CD8-positive, alpha-beta memory T cell (primary cell): ENCODE measurements at regions of chr19 and their contacts with region 1.

Region 1: DNA sequence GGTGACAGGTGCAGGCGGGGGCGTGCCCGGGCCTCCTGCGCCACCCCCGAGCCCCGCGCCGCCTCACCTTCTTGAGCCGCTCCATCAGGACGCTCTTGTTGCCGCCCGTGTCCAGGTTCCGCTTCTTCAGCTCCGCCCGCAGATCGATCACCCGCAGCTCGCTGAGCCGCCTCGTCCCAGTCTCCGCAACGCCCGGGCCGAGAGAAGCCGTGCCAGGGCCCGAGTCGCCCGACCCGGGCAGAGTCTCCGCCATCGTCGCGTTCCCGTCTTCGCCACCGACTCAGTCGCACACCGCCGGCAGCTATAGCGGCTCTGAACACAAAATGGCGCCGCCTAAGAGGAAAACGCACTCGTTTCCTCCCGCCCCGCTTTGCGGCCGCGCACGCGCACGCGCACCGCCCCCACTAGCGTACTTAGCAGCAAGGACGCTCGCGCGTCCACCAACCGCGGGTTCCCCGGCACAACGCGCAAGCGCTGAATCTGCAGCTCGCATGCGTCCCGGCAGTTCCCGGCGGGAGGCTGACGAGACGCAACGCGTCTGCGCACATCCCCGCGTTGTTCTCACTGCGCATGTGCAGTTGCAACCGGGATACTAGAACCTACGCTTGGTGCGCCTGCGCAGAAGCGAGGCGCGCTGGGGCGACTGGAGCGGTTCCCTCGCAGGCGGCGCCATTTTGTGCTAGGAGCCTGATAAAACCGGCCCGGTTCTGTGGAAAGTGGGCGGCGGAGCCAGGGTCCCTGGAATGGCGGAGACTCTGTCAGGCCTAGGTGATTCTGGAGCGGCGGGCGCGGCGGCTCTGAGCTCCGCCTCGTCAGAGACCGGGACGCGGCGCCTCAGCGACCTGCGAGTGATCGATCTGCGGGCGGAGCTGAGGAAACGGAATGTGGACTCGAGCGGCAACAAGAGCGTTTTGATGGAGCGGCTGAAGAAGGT is at the starts of genes SAFB and SAFB2:
- DNase-seq: peak; percentile 99 to 100 (median 100)
- H3K4me3 ChIP-seq: peak within 1 kb of the TSS; percentile 90
- H3K4me3 Mint-ChIP-seq: peak within 1 kb of the TSS; percentile 98 to 100 (median 100)
- H3K27ac ChIP-seq: peak within 1 kb of the TSS; percentile 93
- H3K27ac Mint-ChIP-seq: peak within 1 kb of the TSS; percentile 99 to 100 (median 100)
- H3K4me1 ChIP-seq: peaks cover 76% of the 10 kb centered on the region
- H3K4me1 Mint-ChIP-seq: peaks cover 73 to 85% (median 80%) of the 10 kb centered on the region in 3 donors
- H3K27me3 ChIP-seq: no peaks in the 10 kb centered on the region
- H3K27me3 Mint-ChIP-seq: peaks cover 0 to 6% of the 10 kb centered on the region in 2 donors
- total RNA-seq, gene SAFB: 124 to 132 TPM
- total RNA-seq, gene SAFB2: 87.8 to 98.2 TPM

Region 2: GRCh38 chr19:5719961-5720790 is 97.4 kb after region 1 on chr19 and contains the starts of genes CATSPERD and LONP1:
- CTCF ChIA-PET with region 1: no interaction called
- POLR2A ChIA-PET with region 1: interaction called, 15 read pairs
- DNase-seq: peak; percentile 96 to 99 (median 99)
- H3K4me3 ChIP-seq: peak within 1 kb of the TSS; percentile 93
- H3K4me3 Mint-ChIP-seq: peak within 1 kb of the TSS; percentile 89 to 96 (median 92)
- H3K27ac ChIP-seq: peak within 1 kb of the TSS; percentile 91
- H3K27ac Mint-ChIP-seq: peak within 1 kb of the TSS; percentile 93 to 98 (median 95)
- H3K4me1 ChIP-seq: peaks cover 22% of the 10 kb centered on the region
- H3K4me1 Mint-ChIP-seq: peaks cover 21 to 32% (median 28%) of the 10 kb centered on the region in 3 donors
- H3K27me3 ChIP-seq: no peaks in the 10 kb centered on the region
- H3K27me3 Mint-ChIP-seq: peaks cover 0 to 5% of the 10 kb centered on the region in 2 donors
- total RNA-seq, gene CATSPERD: not detected
- total RNA-seq, gene LONP1: 179 to 204 TPM